ENCODE measurements at regions of chr1 and their contacts with region 1.

Region 1: DNA sequence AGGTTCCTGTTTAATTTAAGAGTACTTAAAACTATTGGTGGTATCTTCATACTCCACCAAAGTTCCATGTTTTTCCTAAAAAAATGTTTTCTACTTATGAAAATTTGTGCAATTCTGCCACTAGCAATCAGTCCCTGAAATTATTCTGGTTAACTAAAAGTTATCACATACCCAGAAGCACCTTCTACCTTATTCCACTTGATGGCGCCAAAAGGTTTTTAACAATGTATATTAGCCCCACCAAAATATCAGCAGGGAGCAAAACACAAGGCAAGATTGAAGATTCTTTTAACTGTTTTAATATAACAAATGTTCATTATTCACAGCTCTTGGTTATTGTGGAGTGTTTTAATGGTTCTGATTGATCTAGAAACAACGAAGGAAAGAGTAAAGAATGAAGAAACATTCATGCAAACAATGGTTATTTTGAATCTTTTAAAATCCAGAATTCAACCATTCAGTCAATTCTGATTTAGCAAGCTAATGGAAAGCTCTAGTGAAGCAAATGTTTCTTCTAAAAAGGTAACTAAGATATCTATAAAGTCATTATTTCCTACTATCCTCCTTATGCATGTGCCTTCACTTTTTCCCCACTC is 67.2 kb downstream of the TTLL7 start:
- DNase-seq: peak; percentile 35
- ATAC-seq: peak; percentile 77
- H3K4me3 ChIP-seq: no peak overlapping the region
- H3K27ac ChIP-seq: no peak overlapping the region
- H3K4me1 ChIP-seq: no peaks in the 10 kb centered on the region
- H3K27me3 ChIP-seq: no peaks in the 10 kb centered on the region
- CTCF ChIP-seq: peak; percentile 69
- EP300 ChIP-seq: no peak
- POLR2A ChIP-seq: no peak
- RAD21 ChIP-seq: peak; percentile 55

Region 2: DNA sequence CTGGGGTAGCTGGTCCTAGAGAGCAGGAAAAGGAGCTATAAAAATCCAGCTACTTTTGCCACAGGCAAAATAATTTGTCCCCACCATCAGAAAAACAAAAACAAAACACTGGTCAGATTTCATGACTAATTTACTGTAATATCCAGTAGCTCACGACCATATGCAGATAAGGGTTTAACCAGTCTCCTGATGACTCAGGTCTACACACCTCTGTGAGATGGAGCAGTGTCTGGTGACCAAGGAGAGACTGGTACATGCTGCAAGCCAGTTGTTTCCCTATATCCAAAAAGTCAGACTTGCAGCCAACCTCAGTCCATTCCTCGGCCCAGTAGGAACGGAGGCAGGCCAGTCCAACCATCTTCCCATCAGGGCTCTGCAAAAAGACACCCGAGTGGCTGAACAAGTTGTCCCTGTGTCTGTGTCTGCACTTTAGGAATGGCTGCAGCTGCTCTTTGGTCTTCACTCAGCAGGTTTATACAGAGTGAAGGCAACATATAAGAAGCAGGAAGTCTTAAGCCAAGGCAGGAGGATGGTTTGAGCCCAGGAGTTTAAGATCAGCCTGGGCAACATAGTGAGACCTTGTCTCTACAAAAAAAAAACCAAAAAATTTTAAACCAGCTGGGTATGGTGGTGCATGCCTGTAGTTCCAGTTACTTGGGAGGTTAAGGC is 495.9 kb after region 1 on chr1:
- CTCF ChIA-PET with region 1: no interaction called
- POLR2A ChIA-PET with region 1: no interaction called
- in situ Hi-C with region 1: loop called (anchors 10 kb)
- intact Hi-C with region 1: no loop called
- DNase-seq: no peak
- ATAC-seq: no peak
- H3K4me3 ChIP-seq: no peak overlapping the region
- H3K27ac ChIP-seq: no peak overlapping the region
- H3K4me1 ChIP-seq: no peaks in the 10 kb centered on the region
- H3K27me3 ChIP-seq: no peaks in the 10 kb centered on the region; a peak in 1 of 5 replicates
- CTCF ChIP-seq: no peak
- EP300 ChIP-seq: no peak
- POLR2A ChIP-seq: no peak
- RAD21 ChIP-seq: no peak

Region 3: DNA sequence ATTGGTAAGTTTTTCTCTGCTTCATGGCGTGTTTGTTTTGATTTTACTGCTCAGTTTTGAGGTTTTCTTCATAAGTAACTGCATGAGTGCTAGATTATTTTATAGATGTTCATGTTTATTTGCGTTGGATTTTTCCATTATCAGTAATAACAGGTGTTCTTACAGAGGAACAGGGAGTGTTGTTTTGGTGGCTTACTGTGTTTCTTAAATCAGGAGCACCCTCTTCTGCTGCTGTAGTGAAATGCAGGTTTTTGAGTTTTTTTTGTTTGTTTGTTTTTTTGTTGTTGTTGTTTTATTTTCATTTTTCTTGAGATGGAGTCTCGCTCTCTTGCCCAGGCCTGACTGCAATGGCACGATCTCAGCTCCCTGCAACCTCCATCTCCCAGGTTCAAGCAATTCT is 609.9 kb after region 1 on chr1:
- CTCF ChIA-PET with region 1: no interaction called
- POLR2A ChIA-PET with region 1: no interaction called
- in situ Hi-C with region 1: no loop called
- intact Hi-C with region 1: loop called (anchors 10 kb)
- DNase-seq: no peak
- ATAC-seq: no peak
- H3K4me3 ChIP-seq: no peak overlapping the region
- H3K27ac ChIP-seq: no peak overlapping the region
- H3K4me1 ChIP-seq: no peaks in the 10 kb centered on the region
- H3K27me3 ChIP-seq: no peaks in the 10 kb centered on the region
- CTCF ChIP-seq: peak; percentile 50
- EP300 ChIP-seq: no peak
- POLR2A ChIP-seq: no peak
- RAD21 ChIP-seq: no peak

Region 4: GRCh38 chr1:84620720-84621313 is 689.1 kb after region 1 on chr1:
- CTCF ChIA-PET with region 1: no interaction called
- POLR2A ChIA-PET with region 1: no interaction called
- in situ Hi-C with region 1: loop called (anchors 25 kb)
- intact Hi-C with region 1: no loop called
- DNase-seq: peak; percentile 41
- ATAC-seq: peak; percentile 95
- H3K4me3 ChIP-seq: peak overlapping the region; percentile 54 to 83 (median 60)
- H3K27ac ChIP-seq: no peak overlapping the region
- H3K4me1 ChIP-seq: peaks cover 19% of the 10 kb centered on the region
- H3K27me3 ChIP-seq: peaks cover 2 to 3% of the 10 kb centered on the region in 2 experiments; a peak in 2 of 5 replicates
- CTCF ChIP-seq: peak; percentile 89
- EP300 ChIP-seq: no peak
- POLR2A ChIP-seq: no peak
- RAD21 ChIP-seq: peak; percentile 77

Region 5: DNA sequence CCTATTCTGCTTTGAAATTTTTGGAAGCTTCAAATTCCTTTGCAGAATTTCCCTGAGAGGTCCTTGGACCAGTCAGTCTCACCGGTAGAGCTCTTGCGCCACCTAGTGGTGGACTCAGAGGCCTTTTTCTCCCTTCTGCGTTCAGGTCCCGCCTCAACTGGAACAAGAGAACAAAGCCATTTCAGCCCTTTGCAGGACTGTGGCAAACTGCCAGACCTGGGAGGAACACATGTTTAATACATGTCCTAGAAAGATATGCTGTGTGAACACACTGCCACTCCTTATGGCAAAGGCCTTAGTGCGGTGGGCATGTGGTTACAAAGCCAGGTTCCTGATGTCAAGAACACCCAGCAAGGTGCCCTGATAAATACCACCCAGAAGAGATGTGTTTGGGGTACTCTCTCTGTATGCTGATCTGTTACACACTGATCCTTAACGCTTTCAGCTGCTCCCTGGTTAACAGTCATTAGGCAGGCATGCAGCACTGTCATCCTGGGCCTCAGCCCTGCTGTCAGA is 840.7 kb after region 1 on chr1:
- CTCF ChIA-PET with region 1: no interaction called
- POLR2A ChIA-PET with region 1: no interaction called
- in situ Hi-C with region 1: no loop called
- intact Hi-C with region 1: loop called (anchors 1 kb)
- DNase-seq: peak; percentile 55
- ATAC-seq: peak; percentile 94
- H3K4me3 ChIP-seq: no peak overlapping the region
- H3K27ac ChIP-seq: no peak overlapping the region
- H3K4me1 ChIP-seq: no peaks in the 10 kb centered on the region
- H3K27me3 ChIP-seq: peaks cover 0 to 14% of the 10 kb centered on the region in 2 experiments; a peak in 2 of 5 replicates
- CTCF ChIP-seq: peak; percentile 84
- EP300 ChIP-seq: no peak
- POLR2A ChIP-seq: no peak
- RAD21 ChIP-seq: peak; percentile 60

Measured in HepG2 (cell line).